Activated CD8-positive, alpha-beta T cell treated with anti-CD3 and anti-CD28 coated beads for 36 hours (primary cell): ENCODE measurements at regions of chr15 and their contacts with region 1.

Region 1: GRCh38 chr15:60916679-60917460 is 312.2 kb downstream of the RORA start:
- DNase-seq: peak; percentile 95
- ATAC-seq: peak; percentile 95
- H3K4me3 Mint-ChIP-seq: no peak overlapping the region
- H3K27ac Mint-ChIP-seq: no peak overlapping the region
- H3K4me1 Mint-ChIP-seq: peaks cover 9% of the 10 kb centered on the region
- H3K27me3 Mint-ChIP-seq: no peaks in the 10 kb centered on the region
- CTCF ChIP-seq: peak; percentile 86

Region 2: DNA sequence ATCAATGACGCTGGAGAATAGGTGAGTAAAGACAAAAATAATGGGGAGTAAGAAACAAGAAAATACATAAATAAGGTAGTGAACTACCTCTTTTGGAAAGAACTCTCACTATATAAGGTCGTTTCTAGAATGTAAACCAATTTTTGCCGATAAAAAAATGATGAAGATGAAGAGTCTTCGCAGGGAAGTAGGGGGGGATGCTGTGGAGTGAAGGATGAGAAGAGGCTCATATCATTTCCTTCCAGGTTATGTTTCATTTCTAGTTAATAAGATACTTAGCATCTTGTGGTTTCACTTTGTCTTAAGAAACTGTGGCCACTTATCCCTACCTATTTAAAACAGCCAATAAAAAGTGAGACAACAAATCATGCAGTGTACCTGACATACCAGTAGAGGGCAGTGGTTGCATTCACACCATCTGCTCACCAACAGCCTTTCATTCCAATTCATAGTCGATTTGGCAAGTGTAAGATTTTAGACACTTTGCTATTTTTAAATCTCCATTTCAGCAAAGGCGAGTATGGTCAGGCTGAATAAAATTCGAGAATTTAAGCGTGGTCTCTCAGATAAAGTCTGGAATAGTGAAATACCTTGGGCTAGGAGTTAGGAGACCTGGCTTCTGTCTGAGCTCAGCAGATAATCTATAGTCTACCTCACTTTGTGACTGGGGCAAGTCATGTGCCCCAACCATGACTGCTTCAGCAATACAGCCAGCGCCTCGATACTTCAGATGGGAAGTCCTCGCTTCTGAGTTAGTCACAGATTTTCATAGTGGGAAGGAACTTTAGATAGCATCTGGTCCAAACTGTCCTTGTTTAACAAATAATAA is 409.1 kb before region 1 on chr15:
- CTCF ChIA-PET with region 1: interaction called, 28 read pairs
- POLR2A ChIA-PET with region 1: no interaction called
- intact Hi-C with region 1: loop called (anchors 2 kb)
- DNase-seq: peak; percentile 69
- ATAC-seq: peak; percentile 81
- H3K4me3 Mint-ChIP-seq: no peak overlapping the region
- H3K27ac Mint-ChIP-seq: peak overlapping the region; percentile 73
- H3K4me1 Mint-ChIP-seq: peaks cover 48% of the 10 kb centered on the region
- H3K27me3 Mint-ChIP-seq: no peaks in the 10 kb centered on the region
- CTCF ChIP-seq: peak; percentile 94

Region 3: GRCh38 chr15:60672400-60672799 is 244.5 kb before region 1 on chr15:
- CTCF ChIA-PET with region 1: interaction called, 10 read pairs
- POLR2A ChIA-PET with region 1: interaction called, 3 read pairs
- intact Hi-C with region 1: no loop called
- DNase-seq: no peak
- ATAC-seq: no peak
- H3K4me3 Mint-ChIP-seq: no peak overlapping the region
- H3K27ac Mint-ChIP-seq: no peak overlapping the region
- H3K4me1 Mint-ChIP-seq: peaks cover 9% of the 10 kb centered on the region
- H3K27me3 Mint-ChIP-seq: no peaks in the 10 kb centered on the region
- CTCF ChIP-seq: peak; percentile 34

Region 4: DNA sequence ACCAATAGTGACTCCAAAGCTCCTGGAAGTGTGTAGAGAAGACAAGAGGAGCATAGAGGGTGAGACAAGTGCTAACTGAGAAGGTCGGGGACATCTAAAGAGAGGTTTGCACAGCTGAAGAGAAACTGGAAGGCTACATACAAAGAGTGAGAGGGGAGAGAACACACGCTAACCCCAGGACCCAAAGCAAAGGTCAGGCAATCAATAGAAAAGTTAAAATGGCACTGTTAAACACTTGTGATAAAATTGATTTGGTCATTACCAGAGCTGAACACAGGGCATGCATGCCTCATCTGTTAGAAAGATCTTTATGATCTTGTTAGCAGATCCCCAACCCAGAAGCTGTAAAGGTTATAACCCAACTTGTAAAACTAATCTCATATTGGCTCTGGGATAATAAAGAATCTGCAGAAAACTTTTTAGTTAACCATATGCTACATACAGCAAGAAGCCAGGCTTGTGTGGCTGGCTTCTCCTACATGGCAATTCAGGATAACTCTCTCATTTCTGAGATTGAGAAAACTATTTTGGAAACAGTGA is 225.3 kb before region 1 on chr15:
- CTCF ChIA-PET with region 1: no interaction called
- POLR2A ChIA-PET with region 1: no interaction called
- intact Hi-C with region 1: no loop called
- DNase-seq: no peak
- ATAC-seq: no peak
- H3K4me3 Mint-ChIP-seq: no peak overlapping the region
- H3K27ac Mint-ChIP-seq: no peak overlapping the region
- H3K4me1 Mint-ChIP-seq: peaks cover 34% of the 10 kb centered on the region
- H3K27me3 Mint-ChIP-seq: peaks cover 6% of the 10 kb centered on the region
- CTCF ChIP-seq: no peak

Region 5: GRCh38 chr15:60899322-60899966 is 17.4 kb before region 1 on chr15:
- CTCF ChIA-PET with region 1: interaction called, 32 read pairs
- POLR2A ChIA-PET with region 1: interaction called, 5 read pairs
- intact Hi-C with region 1: no loop called
- DNase-seq: peak; percentile 49
- ATAC-seq: peak; percentile 83
- H3K4me3 Mint-ChIP-seq: no peak overlapping the region
- H3K27ac Mint-ChIP-seq: peak overlapping the region; percentile 47
- H3K4me1 Mint-ChIP-seq: peaks cover 38% of the 10 kb centered on the region
- H3K27me3 Mint-ChIP-seq: peaks cover 3% of the 10 kb centered on the region
- CTCF ChIP-seq: no peak

Region 6: GRCh38 chr15:60932051-60932915 is 15.4 kb after region 1 on chr15:
- CTCF ChIA-PET with region 1: interaction called, 46 read pairs
- POLR2A ChIA-PET with region 1: no interaction called
- intact Hi-C with region 1: no loop called
- DNase-seq: peak; percentile 54
- ATAC-seq: peak; percentile 69
- H3K4me3 Mint-ChIP-seq: no peak overlapping the region
- H3K27ac Mint-ChIP-seq: no peak overlapping the region
- H3K4me1 Mint-ChIP-seq: peaks cover 6% of the 10 kb centered on the region
- H3K27me3 Mint-ChIP-seq: peaks cover 4% of the 10 kb centered on the region
- CTCF ChIP-seq: no peak